ENCODE measurements at regions of chr13 and their contacts with region 1.

Region 1: DNA sequence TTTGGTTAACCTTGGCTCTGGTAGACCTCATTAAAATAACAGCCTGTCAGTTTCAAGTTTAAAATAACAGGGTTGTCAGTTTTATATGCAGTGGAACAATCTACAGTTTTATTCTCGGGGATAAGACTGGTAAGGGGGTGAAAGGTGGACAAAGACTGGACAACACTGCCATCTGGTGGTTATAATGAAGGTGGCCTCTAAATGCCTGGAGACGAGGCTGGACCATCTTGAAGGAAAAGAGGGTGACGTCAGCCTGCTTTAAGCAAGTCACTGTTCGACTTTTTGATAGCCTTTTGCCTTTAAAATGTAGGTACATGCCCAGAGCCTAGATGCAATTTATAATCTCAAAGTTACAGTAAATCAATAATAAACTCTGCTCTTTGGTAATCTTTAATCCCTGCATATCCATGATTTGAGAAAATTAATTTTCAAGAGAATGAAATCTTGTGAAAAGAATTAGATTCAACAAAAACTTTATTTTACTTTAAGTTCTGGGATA is 117.0 kb downstream of the DCT start:
- DNase-seq: peak; percentile 95
- H3K4me3 ChIP-seq: no peak overlapping the region
- H3K27ac ChIP-seq: peak overlapping the region; percentile 57
- H3K4me1 ChIP-seq: peaks cover 10% of the 10 kb centered on the region
- H3K27me3 ChIP-seq: no peaks in the 10 kb centered on the region
- CTCF ChIP-seq: peak; percentile 85

Region 2: GRCh38 chr13:92573467-92574057 is 1788.9 kb before region 1 on chr13:
- CTCF ChIA-PET with region 1: no interaction called
- POLR2A ChIA-PET with region 1: no interaction called
- intact Hi-C with region 1: loop called (anchors 5 kb)
- DNase-seq: peak; percentile 69
- H3K4me3 ChIP-seq: no peak overlapping the region
- H3K27ac ChIP-seq: no peak overlapping the region
- H3K4me1 ChIP-seq: no peaks in the 10 kb centered on the region
- H3K27me3 ChIP-seq: no peaks in the 10 kb centered on the region
- CTCF ChIP-seq: peak; percentile 70

Region 3: GRCh38 chr13:92716749-92717148 is 1645.7 kb before region 1 on chr13:
- CTCF ChIA-PET with region 1: no interaction called
- POLR2A ChIA-PET with region 1: no interaction called
- intact Hi-C with region 1: loop called (anchors 5 kb)
- DNase-seq: peak; percentile 37
- H3K4me3 ChIP-seq: no peak overlapping the region
- H3K27ac ChIP-seq: no peak overlapping the region
- H3K4me1 ChIP-seq: no peaks in the 10 kb centered on the region
- H3K27me3 ChIP-seq: no peaks in the 10 kb centered on the region
- CTCF ChIP-seq: peak; percentile 56

Region 4: DNA sequence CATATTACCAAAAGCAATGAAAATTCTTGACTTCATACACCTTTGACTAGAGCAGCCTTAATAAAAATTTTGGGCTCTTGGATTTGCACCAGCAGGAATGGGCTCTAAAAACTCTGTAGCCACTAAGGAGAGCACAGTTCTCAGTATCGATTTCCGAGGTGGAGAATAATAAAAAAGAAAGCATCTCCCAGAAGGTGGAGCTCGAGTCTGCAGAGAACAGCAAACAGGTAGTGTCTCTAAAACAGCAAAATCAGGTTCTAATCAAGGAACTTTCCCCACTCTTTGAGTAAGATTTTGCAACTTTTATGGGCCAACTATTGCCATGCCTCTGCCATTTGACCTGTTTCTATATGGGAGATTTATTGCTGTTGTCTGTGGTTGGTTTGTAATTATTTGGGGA is 1394.5 kb before region 1 on chr13:
- CTCF ChIA-PET with region 1: no interaction called
- POLR2A ChIA-PET with region 1: no interaction called
- intact Hi-C with region 1: loop called (anchors 10 kb)
- DNase-seq: peak; percentile 42
- H3K4me3 ChIP-seq: no peak overlapping the region
- H3K27ac ChIP-seq: no peak overlapping the region
- H3K4me1 ChIP-seq: no peaks in the 10 kb centered on the region
- H3K27me3 ChIP-seq: no peaks in the 10 kb centered on the region
- CTCF ChIP-seq: peak; percentile 53

Region 5: GRCh38 chr13:93248627-93249047 is 1113.8 kb before region 1 on chr13:
- CTCF ChIA-PET with region 1: no interaction called
- POLR2A ChIA-PET with region 1: no interaction called
- intact Hi-C with region 1: loop called (anchors 5 kb)
- DNase-seq: peak; percentile 92
- H3K4me3 ChIP-seq: no peak overlapping the region
- H3K27ac ChIP-seq: peak overlapping the region; percentile 77
- H3K4me1 ChIP-seq: peaks cover 67% of the 10 kb centered on the region
- H3K27me3 ChIP-seq: no peaks in the 10 kb centered on the region
- CTCF ChIP-seq: peak; percentile 81

Measured in A673 (cell line).